ENCODE measurements at regions of chr1 and their contacts with region 1.

Region 1: GRCh38 chr1:153922972-153923925 is at the start of gene GATAD2B:
- DNase-seq: peak; percentile 100
- ATAC-seq: peak; percentile 98
- total RNA-seq, gene GATAD2B: 35.3 TPM

Region 2: DNA sequence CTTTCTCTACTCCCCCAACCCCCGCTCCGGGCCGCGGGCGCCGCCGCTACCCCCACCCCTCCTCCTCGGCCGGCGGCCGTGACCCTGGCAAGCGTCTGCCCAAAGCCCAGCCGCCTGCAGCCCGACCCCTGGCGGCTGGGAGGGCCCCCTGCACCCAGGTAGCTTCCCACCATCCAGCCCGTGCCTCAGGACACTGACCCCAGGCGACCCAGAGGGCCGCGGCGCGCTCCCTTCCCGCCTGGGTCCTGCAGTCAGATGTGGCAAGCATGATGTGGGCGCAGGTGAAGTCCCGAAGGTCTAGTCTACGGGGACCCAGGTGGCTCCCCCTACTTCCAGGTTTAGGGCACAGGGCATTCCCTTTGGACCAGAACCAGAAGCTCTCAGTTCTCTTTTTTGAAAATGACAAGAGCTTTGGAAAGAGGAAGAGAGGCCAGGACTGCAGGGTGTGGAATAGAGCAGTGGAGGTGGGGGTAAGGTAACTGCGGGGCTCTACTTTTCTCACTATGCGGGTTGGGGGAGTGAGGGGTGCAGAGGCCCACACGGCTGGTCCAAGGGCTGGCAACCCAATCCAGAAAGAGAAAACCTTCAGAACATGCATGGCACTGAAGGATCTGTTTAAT is 23.5 kb after region 1 on chr1 and contains the start of gene DENND4B:
- intact Hi-C with region 1: loop called (anchors 1 kb)
- DNase-seq: peak; percentile 93
- ATAC-seq: peak; percentile 76
- total RNA-seq, gene DENND4B: 51.6 TPM

Region 3: DNA sequence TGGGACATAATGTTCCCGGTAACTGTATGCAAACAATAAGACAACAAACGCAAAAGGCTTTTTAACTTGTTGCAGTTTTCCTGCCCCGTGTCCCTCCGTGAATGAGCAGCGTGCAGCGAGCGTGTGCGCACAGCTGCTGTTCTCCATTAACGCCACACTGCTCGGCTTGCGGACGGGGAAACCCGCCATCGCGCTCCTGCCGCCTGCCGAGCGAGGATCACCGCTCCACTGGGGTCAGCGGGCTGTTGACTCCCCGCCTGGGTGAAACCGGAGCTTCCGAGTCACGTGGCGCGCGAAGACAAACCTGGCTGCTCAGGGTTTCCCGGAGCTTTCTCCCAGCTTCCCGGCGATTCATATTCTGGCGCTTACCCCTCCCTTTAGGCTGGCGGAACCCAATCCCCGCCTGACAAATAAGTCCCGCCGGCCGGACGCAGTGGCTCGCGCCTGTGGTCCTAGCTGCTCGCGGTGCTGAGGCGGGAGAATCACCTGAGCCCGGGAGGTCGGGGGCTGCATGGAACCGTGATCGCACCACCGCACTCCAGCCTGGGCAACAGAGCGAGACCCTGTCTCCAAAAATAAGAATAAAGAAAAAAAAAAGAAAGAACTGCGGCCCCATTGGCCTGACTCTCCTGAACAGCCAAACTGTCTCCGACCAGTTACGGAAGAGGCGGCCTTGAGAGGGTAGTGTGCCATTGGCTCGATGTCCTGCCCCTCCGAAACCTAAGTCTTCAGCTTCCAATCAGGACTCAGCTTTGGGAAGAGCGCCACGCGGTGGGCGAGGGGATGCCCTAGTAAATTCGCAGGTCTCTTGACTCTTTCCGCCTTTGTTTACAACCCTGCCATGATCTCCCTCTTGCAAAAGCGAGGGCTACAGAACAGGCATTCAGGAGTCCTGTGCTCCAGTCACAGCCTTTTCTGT is 44.1 kb after region 1 on chr1 and contains the start of gene CREB3L4:
- intact Hi-C with region 1: loop called (anchors 1 kb)
- DNase-seq: peak; percentile 95
- ATAC-seq: peak; percentile 88
- total RNA-seq, gene CREB3L4: 4.9 TPM

Measured in Right ventricle myocardium inferior (tissue), 1 donor.